ENCODE measurements at regions of chr18 and their contacts with region 1.

Region 1: GRCh38 chr18:21242141-21242779 is at the start of gene GREB1L:
- DNase-seq: peak; percentile 71
- ATAC-seq: peak; percentile 97
- total RNA-seq, gene GREB1L: 8.0 TPM

Region 2: GRCh38 chr18:21408681-21409080 is 166.4 kb after region 1 on chr18:
- intact Hi-C with region 1: no loop called
- DNase-seq: no peak
- ATAC-seq: no peak

Region 3: DNA sequence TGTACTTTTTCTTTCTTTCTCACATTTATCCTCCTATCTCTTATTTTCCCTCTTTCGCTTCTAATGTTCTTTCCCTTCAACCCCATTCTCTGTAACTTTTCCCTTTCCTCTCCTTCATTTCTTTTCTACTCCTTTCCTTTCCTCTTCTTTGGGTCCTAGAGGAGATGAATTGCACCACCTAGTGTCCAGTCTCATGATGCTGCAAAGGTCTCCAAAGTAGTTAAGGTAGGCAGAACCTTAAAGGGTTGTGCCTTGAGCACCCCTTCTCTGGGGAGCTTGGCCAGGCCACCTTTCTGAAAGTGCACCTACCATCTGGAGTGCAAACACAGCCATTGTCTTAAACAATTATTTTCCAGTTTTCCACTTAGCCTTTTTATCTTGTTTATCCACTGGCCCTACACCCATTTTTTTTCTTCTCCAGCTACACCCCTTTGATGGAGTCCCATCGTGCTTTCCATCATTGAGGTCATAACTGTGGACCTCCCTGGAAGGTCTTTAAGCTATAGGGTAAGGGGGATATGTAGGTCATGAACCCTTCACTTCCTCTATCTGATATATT is 202.3 kb after region 1 on chr18:
- intact Hi-C with region 1: loop called (anchors 10 kb)
- DNase-seq: no peak
- ATAC-seq: peak; percentile 83